Body of pancreas (tissue), 4 donors: ENCODE measurements at regions of chr14 and their contacts with region 1.

Region 1: DNA sequence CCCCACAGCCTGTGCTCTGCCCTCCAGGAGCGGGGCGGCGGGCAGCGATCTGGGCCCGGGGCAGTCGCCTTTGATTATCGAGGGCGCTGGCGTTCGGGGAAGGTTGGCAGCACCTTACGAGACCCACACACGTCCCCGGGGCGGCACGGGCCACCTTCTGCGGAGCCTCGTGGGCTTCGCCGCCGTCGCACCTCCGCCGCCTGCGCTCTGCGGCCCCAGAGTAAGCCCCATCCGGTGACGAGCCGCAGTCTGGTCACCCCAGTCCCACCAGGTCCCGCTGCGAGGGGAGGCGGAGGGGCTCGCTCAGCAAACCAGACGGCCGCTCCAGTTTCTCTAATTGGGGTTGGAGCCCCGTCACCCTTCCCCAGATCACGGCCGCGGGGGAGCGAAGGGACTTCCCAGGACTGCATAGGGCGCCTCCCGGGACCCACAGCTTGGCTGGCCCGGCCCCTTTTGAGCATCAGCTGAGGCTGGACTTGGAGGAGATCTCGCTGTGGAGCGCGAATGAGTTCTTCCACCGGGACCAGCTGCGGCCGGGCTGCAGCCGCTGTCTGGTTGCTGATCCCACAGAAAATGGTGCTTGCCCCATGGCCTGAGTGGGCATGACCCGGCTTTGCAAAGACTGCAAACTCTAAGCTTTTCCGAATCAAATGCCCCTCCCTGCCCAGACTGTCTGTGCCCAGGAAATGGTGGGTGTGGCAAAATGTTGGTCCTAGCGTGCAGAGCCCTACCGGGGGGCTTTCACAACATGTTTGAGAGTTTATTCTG is 560 bp downstream of the LGALS3 start:
- DNase-seq: peak; percentile 60 to 71 (median 67)
- ATAC-seq: peak; percentile 68
- H3K4me3 ChIP-seq: peak overlapping the region; percentile 31 to 57
- H3K27ac ChIP-seq: peak overlapping the region; percentile 83 to 91 (median 88)
- H3K4me1 ChIP-seq: peaks cover 35% of the 10 kb centered on the region
- H3K27me3 ChIP-seq: no peaks in the 10 kb centered on the region
- CTCF ChIP-seq: no peak
- POLR2A ChIP-seq: peak in 2 of 3 donors; percentile 53 to 67

Region 2: GRCh38 chr14:55094321-55095157 is 35.1 kb before region 1 on chr14:
- intact Hi-C with region 1: loop called (anchors 5 kb)
- DNase-seq: no peak
- ATAC-seq: no peak
- H3K4me3 ChIP-seq: no peak overlapping the region
- H3K27ac ChIP-seq: no peak overlapping the region
- H3K4me1 ChIP-seq: peaks cover 9% of the 10 kb centered on the region
- H3K27me3 ChIP-seq: no peaks in the 10 kb centered on the region
- CTCF ChIP-seq: no peak
- POLR2A ChIP-seq: no peak